ENCODE measurements at regions of chr17 and their contacts with region 1.

Region 1: GRCh38 chr17:39153599-39154051 is 2.2 kb upstream of the PLXDC1 start:
- DNase-seq: peak; percentile 84
- H3K4me3 Mint-ChIP-seq: peak overlapping the region; percentile 95
- H3K27ac Mint-ChIP-seq: peak overlapping the region; percentile 84
- H3K4me1 Mint-ChIP-seq: peaks cover 16% of the 10 kb centered on the region
- H3K27me3 Mint-ChIP-seq: peaks cover 26% of the 10 kb centered on the region

Region 2: DNA sequence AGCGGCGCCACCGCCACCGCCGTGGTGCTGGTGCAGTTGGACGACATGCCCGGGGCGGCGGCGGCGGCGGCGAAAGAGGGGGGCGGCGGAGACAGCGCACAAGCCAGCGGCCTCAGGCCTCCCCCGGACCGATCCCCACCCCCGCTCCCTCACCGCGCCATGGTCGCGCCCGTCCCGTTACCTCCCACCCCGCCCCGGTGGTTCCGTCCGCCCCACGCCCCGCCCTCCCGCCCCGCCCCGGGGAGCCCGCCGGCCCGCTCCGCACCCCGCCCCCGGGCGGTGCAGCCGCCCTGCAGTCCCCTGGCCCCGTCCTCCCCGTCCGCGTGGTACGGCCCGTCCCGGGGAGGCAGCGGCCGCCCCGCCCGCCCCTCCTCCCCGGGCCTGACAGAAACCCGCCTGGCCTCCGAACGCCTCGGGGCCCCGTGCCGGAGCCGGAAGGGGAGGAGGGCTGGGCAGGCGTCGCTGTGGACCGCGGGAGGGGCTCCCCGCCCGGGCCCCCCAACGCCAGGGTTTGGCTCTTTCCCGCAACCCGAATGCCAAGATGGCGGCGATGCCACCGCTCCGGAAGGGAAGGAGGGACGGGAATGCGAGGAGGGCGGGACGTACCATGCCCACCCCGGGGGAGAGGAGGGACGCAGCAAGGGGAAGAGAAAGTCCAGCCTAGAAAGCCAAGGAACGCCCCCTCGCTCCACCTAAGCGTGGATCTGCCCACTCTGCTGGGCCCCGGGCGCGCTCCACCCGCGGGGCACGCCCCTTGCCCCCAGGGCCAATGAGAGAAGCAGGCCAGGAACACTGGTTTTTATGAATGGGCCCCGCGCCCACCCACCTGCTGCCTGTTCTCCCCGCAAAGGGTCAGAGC is 354.0 kb before region 1 on chr17 and contains the start of gene PIP4K2B:
- intact Hi-C with region 1: loop called (anchors 5 kb)
- DNase-seq: peak; percentile 86
- H3K4me3 Mint-ChIP-seq: peak within 1 kb of the TSS; percentile 98
- H3K27ac Mint-ChIP-seq: peak within 1 kb of the TSS; percentile 91
- H3K4me1 Mint-ChIP-seq: peaks cover 30% of the 10 kb centered on the region
- H3K27me3 Mint-ChIP-seq: no peaks in the 10 kb centered on the region
- total RNA-seq, gene PIP4K2B: 35.3 and 45.3 TPM in 2 replicates

Region 3: GRCh38 chr17:38868817-38869525 is 284.7 kb before region 1 on chr17:
- intact Hi-C with region 1: loop called (anchors 5 kb)
- DNase-seq: peak; percentile 82
- H3K4me3 Mint-ChIP-seq: peak overlapping the region; percentile 93
- H3K27ac Mint-ChIP-seq: peak overlapping the region; percentile 90
- H3K4me1 Mint-ChIP-seq: peaks cover 41% of the 10 kb centered on the region
- H3K27me3 Mint-ChIP-seq: no peaks in the 10 kb centered on the region

Region 4: GRCh38 chr17:39011907-39012468 is 141.6 kb before region 1 on chr17:
- intact Hi-C with region 1: no loop called
- DNase-seq: no peak
- H3K4me3 Mint-ChIP-seq: no peak overlapping the region
- H3K27ac Mint-ChIP-seq: no peak overlapping the region
- H3K4me1 Mint-ChIP-seq: peaks cover 6% of the 10 kb centered on the region
- H3K27me3 Mint-ChIP-seq: no peaks in the 10 kb centered on the region

Region 5: GRCh38 chr17:39057701-39058206 is 95.9 kb before region 1 on chr17:
- intact Hi-C with region 1: loop called (anchors 5 kb)
- DNase-seq: no peak
- H3K4me3 Mint-ChIP-seq: peak overlapping the region; percentile 75
- H3K27ac Mint-ChIP-seq: no peak overlapping the region
- H3K4me1 Mint-ChIP-seq: peaks cover 12% of the 10 kb centered on the region
- H3K27me3 Mint-ChIP-seq: peaks cover 6% of the 10 kb centered on the region

Region 6: GRCh38 chr17:39099663-39100286 is 53.9 kb before region 1 on chr17:
- intact Hi-C with region 1: loop called (anchors 5 kb)
- DNase-seq: no peak
- H3K4me3 Mint-ChIP-seq: no peak overlapping the region
- H3K27ac Mint-ChIP-seq: no peak overlapping the region
- H3K4me1 Mint-ChIP-seq: peaks cover 23% of the 10 kb centered on the region
- H3K27me3 Mint-ChIP-seq: peaks cover 9% of the 10 kb centered on the region